Dorsolateral prefrontal cortex (tissue), 120 donors: ENCODE measurements at regions of chr20 and their contacts with region 1.

Region 1: DNA sequence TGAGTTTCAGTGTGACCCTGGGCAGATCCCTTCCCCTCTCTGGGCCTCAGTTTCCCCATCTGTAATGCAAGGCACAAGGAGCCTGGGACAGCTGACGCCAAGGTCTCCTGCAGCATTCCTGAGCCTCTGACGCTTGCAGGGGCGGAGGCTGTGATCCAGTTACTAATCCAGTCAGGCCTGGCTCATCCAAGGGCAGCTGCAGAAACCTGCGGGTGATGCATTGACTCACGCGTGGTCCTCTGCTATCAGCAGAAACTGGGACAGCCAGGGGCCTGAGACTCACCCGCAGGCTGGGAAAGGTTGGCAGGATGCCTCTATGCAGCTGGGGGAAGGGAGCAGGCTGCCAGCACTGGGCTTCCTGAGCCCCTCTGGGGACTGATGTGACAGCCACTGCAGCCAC is 65.0 kb upstream of the SIRPA start:
- DNase-seq: peak; percentile 35 to 94 (median 81)
- H3K4me3 ChIP-seq: peak overlapping the region in 1 of 59 donors; percentile 8
- H3K27ac ChIP-seq: peak overlapping the region; percentile 60 to 100 (median 97)
- H3K27me3 ChIP-seq: no peaks in the 10 kb centered on the region
- CTCF ChIP-seq: no peak

Region 2: GRCh38 chr20:1469925-1470571 is 360.2 kb before region 1 on chr20:
- intact Hi-C with region 1: no loop called
- DNase-seq: peak in 9 of 10 donors; percentile 40 to 78 (median 66)
- H3K4me3 ChIP-seq: no peak overlapping the region
- H3K27ac ChIP-seq: no peak overlapping the region
- H3K27me3 ChIP-seq: no peaks in the 10 kb centered on the region
- CTCF ChIP-seq: peak in 54 of 56 donors; percentile 43 to 73 (median 62)

Region 3: DNA sequence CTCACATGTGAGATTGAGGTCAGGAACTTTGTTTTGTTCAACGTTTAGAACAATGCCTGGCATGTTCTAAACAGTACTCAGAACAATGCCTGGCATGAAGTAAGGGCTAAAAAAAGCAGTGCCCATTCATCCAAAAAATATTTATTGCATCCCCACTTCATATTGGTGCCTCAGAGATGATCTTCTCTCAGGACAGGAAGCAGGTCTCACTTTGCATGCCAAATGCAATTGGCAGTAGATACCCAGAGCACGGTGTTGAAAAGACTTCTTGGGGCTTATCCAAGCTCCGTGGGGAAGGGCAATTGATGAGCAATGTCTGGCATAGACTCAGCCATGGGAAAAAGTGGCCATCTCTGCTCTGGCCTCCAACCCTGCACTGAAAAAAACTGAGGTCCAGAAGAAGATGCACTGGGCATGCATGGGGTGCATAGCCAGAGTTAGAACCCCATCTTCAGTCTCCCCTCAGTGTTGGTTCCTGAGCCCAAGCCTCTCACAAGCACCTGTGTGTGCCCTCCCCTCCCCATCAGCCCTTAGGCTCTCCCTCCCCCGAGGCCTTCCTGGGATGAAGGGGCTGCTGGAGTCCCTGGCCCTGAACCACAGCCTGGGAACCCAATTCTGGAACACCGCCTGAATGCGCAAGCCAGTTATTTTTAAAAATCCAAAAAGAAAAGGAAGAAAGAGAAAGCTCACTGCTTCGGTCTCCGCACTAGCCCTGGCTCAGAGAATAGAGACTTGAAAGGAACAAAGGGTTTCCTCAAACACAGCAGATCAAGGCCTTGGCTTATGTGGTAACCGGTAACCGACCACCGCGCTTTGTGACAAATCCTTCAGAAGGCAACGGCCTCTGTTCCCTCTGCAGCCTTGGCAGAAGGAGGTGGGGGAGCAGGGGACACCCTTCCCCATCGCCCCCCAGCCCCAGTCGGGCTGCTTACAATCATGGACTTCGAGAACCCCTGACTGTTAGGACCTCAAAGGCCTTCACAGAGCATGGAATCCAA is 13.6 kb before region 1 on chr20:
- intact Hi-C with region 1: loop called in 1 of 2 experiments (anchors 1 kb)
- DNase-seq: peak in 3 of 10 donors; percentile 39 to 66 (median 41)
- H3K4me3 ChIP-seq: peak overlapping the region in 10 of 59 donors; percentile 0 to 45 (median 14)
- H3K27ac ChIP-seq: peak overlapping the region; percentile 63 to 99 (median 97)
- H3K27me3 ChIP-seq: no peaks in the 10 kb centered on the region
- CTCF ChIP-seq: peak in 1 of 56 donors; percentile 12